CD8-positive, alpha-beta T cell (primary cell): ENCODE measurements at regions of chr1 and their contacts with region 1.

Region 1: GRCh38 chr1:161201828-161202725 is at the start of gene NDUFS2:
- DNase-seq: peak; percentile 90 to 99 (median 95)
- ATAC-seq: peak; percentile 98
- H3K4me3 ChIP-seq: peak within 1 kb of the TSS; percentile 84 to 93
- H3K4me3 Mint-ChIP-seq: peak within 1 kb of the TSS; percentile 95
- H3K27ac ChIP-seq: peak within 1 kb of the TSS; percentile 87
- H3K27ac Mint-ChIP-seq: peak within 1 kb of the TSS; percentile 98
- H3K4me1 ChIP-seq: peaks cover 58% of the 10 kb centered on the region
- H3K4me1 Mint-ChIP-seq: peaks cover 69% of the 10 kb centered on the region
- H3K27me3 ChIP-seq: no peaks in the 10 kb centered on the region
- H3K27me3 Mint-ChIP-seq: no peaks in the 10 kb centered on the region
- CTCF ChIP-seq: no peak
- total RNA-seq, gene NDUFS2: 53.0 to 63.4 TPM

Region 2: DNA sequence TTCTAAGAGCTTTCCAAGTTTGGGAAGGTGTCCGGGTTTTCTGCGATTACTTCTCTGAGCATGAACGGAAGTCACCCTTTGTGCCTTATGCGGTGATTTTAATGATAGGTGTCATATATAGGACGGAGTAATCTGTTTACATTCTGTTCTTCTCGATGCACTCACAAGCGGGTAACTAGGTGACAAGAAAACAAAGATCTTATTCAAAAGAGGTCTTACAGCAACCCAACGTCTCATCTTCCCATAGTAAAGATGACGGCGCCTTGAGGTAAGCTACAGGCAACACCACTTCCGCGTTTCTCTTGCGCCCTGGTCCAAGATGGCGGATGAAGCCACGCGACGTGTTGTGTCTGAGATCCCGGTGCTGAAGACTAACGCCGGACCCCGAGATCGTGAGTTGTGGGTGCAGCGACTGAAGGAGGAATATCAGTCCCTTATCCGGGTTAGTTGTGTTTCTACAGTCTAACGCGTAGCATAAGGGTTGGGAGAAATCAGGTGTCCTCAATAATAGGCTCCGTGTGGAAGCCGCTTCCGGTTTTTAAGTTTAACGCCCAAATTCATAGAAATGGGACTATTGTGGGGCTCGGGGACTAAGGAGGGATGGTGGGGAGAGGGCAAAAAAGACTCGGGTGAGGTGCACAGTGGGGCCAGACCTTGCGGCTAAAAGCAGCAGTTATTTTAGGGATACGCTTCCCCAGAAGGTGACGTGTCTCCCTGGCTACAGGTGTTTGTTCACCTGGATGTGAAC is 48.2 kb before region 1 on chr1 and contains the start of gene UFC1:
- CTCF ChIA-PET with region 1: interaction called, 3 read pairs
- POLR2A ChIA-PET with region 1: interaction called, 8 read pairs
- intact Hi-C with region 1: loop called (anchors 1 kb)
- DNase-seq: peak; percentile 66 to 96 (median 78)
- ATAC-seq: peak; percentile 92
- H3K4me3 ChIP-seq: peak within 1 kb of the TSS; percentile 95 to 98
- H3K4me3 Mint-ChIP-seq: peak within 1 kb of the TSS; percentile 96
- H3K27ac ChIP-seq: peak within 1 kb of the TSS; percentile 98 to 99
- H3K27ac Mint-ChIP-seq: peak within 1 kb of the TSS; percentile 100
- H3K4me1 ChIP-seq: peaks cover 17% of the 10 kb centered on the region
- H3K4me1 Mint-ChIP-seq: peaks cover 30% of the 10 kb centered on the region
- H3K27me3 ChIP-seq: no peaks in the 10 kb centered on the region
- H3K27me3 Mint-ChIP-seq: no peaks in the 10 kb centered on the region
- CTCF ChIP-seq: no peak
- total RNA-seq, gene UFC1: 94.7 to 96.6 TPM

Region 3: DNA sequence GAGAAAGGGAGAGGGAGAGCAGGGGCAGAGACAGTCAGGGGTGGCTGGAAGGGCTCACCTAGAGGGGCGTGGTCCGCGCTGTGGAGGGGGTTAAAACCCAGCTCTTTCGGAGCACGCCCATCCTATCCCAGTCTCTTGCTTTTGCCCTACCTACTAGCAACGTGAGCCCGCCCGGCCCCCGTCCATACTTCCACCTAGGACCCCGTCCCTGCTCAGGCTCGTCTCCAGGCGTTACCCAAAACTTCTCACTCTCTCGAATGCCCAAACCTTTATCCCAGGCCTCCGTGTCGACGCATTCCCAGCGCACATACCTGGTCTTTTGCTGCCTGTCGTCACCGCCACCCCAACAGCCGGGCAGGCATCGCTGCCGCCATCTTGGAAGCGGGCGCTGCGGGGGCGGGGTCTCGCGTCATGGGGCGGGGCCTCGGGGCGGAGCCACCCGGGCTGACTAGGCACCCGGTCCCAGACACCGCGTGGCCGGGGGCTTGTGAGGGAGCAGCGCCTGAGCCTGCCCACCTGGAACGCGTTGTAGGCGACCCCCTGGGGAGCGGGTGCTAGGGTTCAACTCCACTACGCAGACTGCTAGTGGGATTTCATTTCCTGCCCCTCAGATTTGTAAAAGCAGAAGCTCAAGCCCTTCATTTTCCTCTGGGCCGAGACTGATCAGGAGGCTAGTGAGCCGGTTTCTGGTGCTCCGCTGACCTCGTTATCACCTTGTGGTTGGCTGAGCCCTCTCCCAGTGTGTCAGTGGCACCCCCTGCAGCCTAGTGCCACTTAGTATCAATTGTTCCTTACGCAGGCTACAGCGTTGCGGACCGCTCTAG is 24.8 kb before region 1 on chr1 and contains the start of gene B4GALT3:
- CTCF ChIA-PET with region 1: interaction called, 9 read pairs
- POLR2A ChIA-PET with region 1: interaction called, 30 read pairs
- intact Hi-C with region 1: loop called (anchors 1 to 2 kb)
- DNase-seq: peak; percentile 88 to 97 (median 90)
- ATAC-seq: peak; percentile 89
- H3K4me3 ChIP-seq: peak within 1 kb of the TSS; percentile 90 to 92
- H3K4me3 Mint-ChIP-seq: peak within 1 kb of the TSS; percentile 98
- H3K27ac ChIP-seq: peak within 1 kb of the TSS; percentile 80 to 87
- H3K27ac Mint-ChIP-seq: peak within 1 kb of the TSS; percentile 99
- H3K4me1 ChIP-seq: peaks cover 50% of the 10 kb centered on the region
- H3K4me1 Mint-ChIP-seq: peaks cover 75% of the 10 kb centered on the region
- H3K27me3 ChIP-seq: no peaks in the 10 kb centered on the region
- H3K27me3 Mint-ChIP-seq: no peaks in the 10 kb centered on the region
- CTCF ChIP-seq: no peak
- total RNA-seq, gene B4GALT3: 33.8 to 36.4 TPM

Region 4: GRCh38 chr1:161216945-161217712 is 15.1 kb after region 1 on chr1:
- CTCF ChIA-PET with region 1: interaction called, 94 read pairs
- POLR2A ChIA-PET with region 1: interaction called, 50 read pairs
- intact Hi-C with region 1: no loop called
- DNase-seq: peak in 3 of 9 experiments; percentile 32 to 58 (median 42)
- ATAC-seq: peak; percentile 12
- H3K4me3 ChIP-seq: peak overlapping the region; percentile 20 to 25
- H3K4me3 Mint-ChIP-seq: peak overlapping the region; percentile 54
- H3K27ac ChIP-seq: peak overlapping the region; percentile 18 to 75
- H3K27ac Mint-ChIP-seq: peak overlapping the region; percentile 91
- H3K4me1 ChIP-seq: peaks cover 56% of the 10 kb centered on the region
- H3K4me1 Mint-ChIP-seq: peaks cover 59% of the 10 kb centered on the region
- H3K27me3 ChIP-seq: no peaks in the 10 kb centered on the region
- H3K27me3 Mint-ChIP-seq: no peaks in the 10 kb centered on the region
- CTCF ChIP-seq: no peak

Region 5: GRCh38 chr1:161314201-161314981 is 112.3 kb after region 1 on chr1 and contains the start of gene SDHC:
- CTCF ChIA-PET with region 1: no interaction called
- POLR2A ChIA-PET with region 1: interaction called, 5 read pairs
- intact Hi-C with region 1: loop called (anchors 1 to 2 kb)
- DNase-seq: peak; percentile 79 to 95 (median 92)
- ATAC-seq: peak; percentile 95
- H3K4me3 ChIP-seq: peak within 1 kb of the TSS; percentile 63 to 90
- H3K4me3 Mint-ChIP-seq: peak within 1 kb of the TSS; percentile 97
- H3K27ac ChIP-seq: peak within 1 kb of the TSS; percentile 88 to 98
- H3K27ac Mint-ChIP-seq: peak within 1 kb of the TSS; percentile 99
- H3K4me1 ChIP-seq: peaks cover 14% of the 10 kb centered on the region
- H3K4me1 Mint-ChIP-seq: peaks cover 25% of the 10 kb centered on the region
- H3K27me3 ChIP-seq: no peaks in the 10 kb centered on the region
- H3K27me3 Mint-ChIP-seq: no peaks in the 10 kb centered on the region
- CTCF ChIP-seq: peak; percentile 38
- total RNA-seq, gene SDHC: 41.5 to 41.9 TPM